B cell (primary cell): ENCODE measurements at regions of chr2 and their contacts with region 1.

Region 1: DNA sequence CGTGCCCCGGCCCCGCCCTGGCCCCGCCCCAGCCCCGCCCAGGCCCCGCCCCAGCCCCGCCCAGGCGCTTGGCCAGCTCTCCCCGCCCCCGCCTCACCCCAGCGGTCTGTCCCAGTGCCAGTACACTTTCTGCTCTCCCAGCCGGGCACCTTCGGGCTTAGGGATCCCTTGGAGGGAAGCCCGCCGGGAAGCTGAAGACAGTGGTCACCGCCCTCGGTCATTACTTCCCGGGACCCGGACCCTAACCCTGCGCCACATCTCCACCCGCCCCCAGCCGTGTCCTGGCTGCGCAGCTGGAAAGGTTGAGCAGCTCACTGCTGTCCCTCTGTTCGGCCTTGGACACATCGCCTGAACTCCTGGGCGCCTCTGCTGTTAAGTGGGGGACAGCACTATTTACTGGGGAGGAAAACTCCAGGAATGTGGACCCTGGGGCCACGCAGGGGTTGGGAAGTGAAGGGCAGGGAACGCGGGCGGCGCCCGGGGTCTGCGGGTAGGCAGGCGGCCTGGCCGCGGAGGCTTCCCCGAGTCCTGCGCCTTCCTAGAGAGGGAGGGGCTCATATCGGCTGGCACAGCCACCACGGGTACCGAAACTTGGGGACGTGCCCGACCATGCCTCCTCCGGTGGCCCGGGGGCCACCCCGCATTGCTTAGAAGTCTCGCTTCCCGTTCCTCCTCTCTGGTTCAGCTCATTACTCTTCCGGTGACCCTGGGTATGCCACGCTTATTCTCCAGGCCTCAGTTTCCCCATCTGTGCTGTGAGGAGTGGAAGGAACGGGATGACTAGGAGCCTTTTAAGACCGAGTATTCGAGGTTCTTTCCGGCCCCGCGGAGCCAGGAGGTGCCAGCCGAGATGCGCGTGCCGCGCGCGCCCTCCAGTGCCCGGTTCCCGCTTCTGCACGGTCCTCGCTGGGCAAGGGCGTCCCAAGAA is 121.0 kb downstream of the GYPC start:
- DNase-seq: peak; percentile 77
- ATAC-seq: peak; percentile 77
- H3K4me3 ChIP-seq: peak overlapping the region; percentile 17 to 66 (median 56)
- H3K4me3 Mint-ChIP-seq: peak overlapping the region; percentile 97
- H3K27ac ChIP-seq: peak overlapping the region in 1 of 2 donors; percentile 21
- H3K27ac Mint-ChIP-seq: peak overlapping the region; percentile 7
- H3K4me1 ChIP-seq: peaks cover 3 to 10% of the 10 kb centered on the region in 2 donors
- H3K4me1 Mint-ChIP-seq: peaks cover 9% of the 10 kb centered on the region
- H3K27me3 ChIP-seq: peaks cover 0 to 10% (median 0%) of the 10 kb centered on the region in 4 experiments
- H3K27me3 Mint-ChIP-seq: peaks cover 36% of the 10 kb centered on the region
- CTCF ChIP-seq: peak; percentile 91

Region 2: DNA sequence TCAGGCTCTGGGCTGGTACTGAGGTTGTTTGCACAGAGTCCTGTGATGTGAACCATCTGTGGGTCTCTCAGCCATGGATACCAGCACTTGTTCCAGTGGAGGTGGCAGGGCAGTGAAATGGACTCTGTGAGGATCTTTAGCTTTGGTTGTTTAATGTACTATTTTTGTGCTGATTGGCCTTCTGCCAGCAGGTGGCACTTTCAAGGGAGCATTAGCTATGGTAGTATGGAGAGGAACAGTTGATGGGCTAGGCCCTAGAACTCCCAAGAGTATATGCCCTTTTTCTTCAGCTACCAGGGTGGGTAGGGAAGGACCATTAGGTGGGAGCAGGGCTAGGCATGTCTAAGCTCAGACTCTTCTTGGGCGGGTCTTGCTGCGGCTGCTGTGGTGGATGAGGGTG is 378.0 kb before region 1 on chr2:
- CTCF ChIA-PET with region 1: interaction called, 11 read pairs
- POLR2A ChIA-PET with region 1: no interaction called
- intact Hi-C with region 1: no loop called
- DNase-seq: peak; percentile 12
- ATAC-seq: no peak
- H3K4me3 ChIP-seq: no peak overlapping the region
- H3K4me3 Mint-ChIP-seq: no peak overlapping the region
- H3K27ac ChIP-seq: no peak overlapping the region
- H3K27ac Mint-ChIP-seq: no peak overlapping the region
- H3K4me1 ChIP-seq: no peaks in the 10 kb centered on the region
- H3K4me1 Mint-ChIP-seq: no peaks in the 10 kb centered on the region
- H3K27me3 ChIP-seq: no peaks in the 10 kb centered on the region
- H3K27me3 Mint-ChIP-seq: peaks cover 10% of the 10 kb centered on the region
- CTCF ChIP-seq: no peak

Region 3: DNA sequence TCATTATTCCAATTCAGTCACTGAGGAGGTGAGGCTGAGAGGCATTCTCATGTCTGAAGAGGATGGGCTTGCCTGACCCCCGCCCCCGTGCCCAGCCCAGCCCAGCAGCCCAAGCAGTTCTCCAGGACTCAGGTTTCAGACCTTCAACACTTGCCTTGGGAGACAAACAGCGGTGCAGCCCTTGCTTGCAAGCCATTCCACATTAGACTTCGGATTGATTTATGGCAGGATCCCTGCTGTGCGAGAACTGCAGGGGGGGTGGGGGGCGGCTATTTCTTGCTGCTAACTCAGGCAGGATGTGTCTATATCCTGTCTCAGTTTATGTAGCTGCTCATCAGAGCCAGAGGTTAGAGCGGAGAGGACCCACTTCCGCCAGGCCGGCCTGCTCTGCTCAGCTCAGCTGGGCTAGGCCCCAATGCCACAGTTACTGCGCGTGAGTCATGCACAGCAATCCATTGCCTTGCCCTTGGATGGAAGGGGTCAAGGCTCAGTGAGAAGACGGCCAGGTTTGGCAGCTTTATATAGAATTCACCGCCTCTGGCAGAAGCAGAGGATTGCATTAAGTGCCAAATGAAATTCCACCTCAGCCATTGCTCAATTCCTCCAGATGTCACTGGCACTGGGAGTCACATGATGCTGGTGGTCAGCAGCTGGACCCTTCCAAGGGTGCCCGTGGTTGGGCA is 119.2 kb before region 1 on chr2:
- CTCF ChIA-PET with region 1: no interaction called
- POLR2A ChIA-PET with region 1: no interaction called
- intact Hi-C with region 1: loop called (anchors 10 kb)
- DNase-seq: peak; percentile 64
- ATAC-seq: peak; percentile 60
- H3K4me3 ChIP-seq: peak overlapping the region; percentile 65 to 88 (median 73)
- H3K4me3 Mint-ChIP-seq: peak overlapping the region; percentile 99
- H3K27ac ChIP-seq: peak overlapping the region; percentile 80 to 81
- H3K27ac Mint-ChIP-seq: peak overlapping the region; percentile 94
- H3K4me1 ChIP-seq: peaks cover 47 to 56% of the 10 kb centered on the region in 2 donors
- H3K4me1 Mint-ChIP-seq: peaks cover 62% of the 10 kb centered on the region
- H3K27me3 ChIP-seq: no peaks in the 10 kb centered on the region
- H3K27me3 Mint-ChIP-seq: no peaks in the 10 kb centered on the region
- CTCF ChIP-seq: no peak